ENCODE measurements at regions of chr14 and their contacts with region 1.

Region 1: GRCh38 chr14:63632932-63633514 is 8.6 kb downstream of the WDR89 start:
- DNase-seq: peak in 1 of 2 experiments; percentile 44
- H3K4me3 ChIP-seq: no peak overlapping the region
- H3K27ac ChIP-seq: no peak overlapping the region
- H3K4me1 ChIP-seq: no peaks in the 10 kb centered on the region
- H3K27me3 ChIP-seq: no peaks in the 10 kb centered on the region
- CTCF ChIP-seq: peak; percentile 75

Region 2: GRCh38 chr14:63248211-63248610 is 384.8 kb before region 1 on chr14:
- CTCF ChIA-PET with region 1: no interaction called
- POLR2A ChIA-PET with region 1: no interaction called
- intact Hi-C with region 1: no loop called
- DNase-seq: no peak
- H3K4me3 ChIP-seq: no peak overlapping the region
- H3K27ac ChIP-seq: no peak overlapping the region
- H3K4me1 ChIP-seq: no peaks in the 10 kb centered on the region
- H3K27me3 ChIP-seq: no peaks in the 10 kb centered on the region
- CTCF ChIP-seq: no peak

Region 3: GRCh38 chr14:63388763-63389431 is 244.1 kb before region 1 on chr14:
- CTCF ChIA-PET with region 1: no interaction called
- POLR2A ChIA-PET with region 1: no interaction called
- intact Hi-C with region 1: loop called (anchors 2 kb)
- DNase-seq: peak in 1 of 2 experiments; percentile 57
- H3K4me3 ChIP-seq: no peak overlapping the region
- H3K27ac ChIP-seq: no peak overlapping the region
- H3K4me1 ChIP-seq: no peaks in the 10 kb centered on the region
- H3K27me3 ChIP-seq: no peaks in the 10 kb centered on the region
- CTCF ChIP-seq: peak; percentile 84

Region 4: DNA sequence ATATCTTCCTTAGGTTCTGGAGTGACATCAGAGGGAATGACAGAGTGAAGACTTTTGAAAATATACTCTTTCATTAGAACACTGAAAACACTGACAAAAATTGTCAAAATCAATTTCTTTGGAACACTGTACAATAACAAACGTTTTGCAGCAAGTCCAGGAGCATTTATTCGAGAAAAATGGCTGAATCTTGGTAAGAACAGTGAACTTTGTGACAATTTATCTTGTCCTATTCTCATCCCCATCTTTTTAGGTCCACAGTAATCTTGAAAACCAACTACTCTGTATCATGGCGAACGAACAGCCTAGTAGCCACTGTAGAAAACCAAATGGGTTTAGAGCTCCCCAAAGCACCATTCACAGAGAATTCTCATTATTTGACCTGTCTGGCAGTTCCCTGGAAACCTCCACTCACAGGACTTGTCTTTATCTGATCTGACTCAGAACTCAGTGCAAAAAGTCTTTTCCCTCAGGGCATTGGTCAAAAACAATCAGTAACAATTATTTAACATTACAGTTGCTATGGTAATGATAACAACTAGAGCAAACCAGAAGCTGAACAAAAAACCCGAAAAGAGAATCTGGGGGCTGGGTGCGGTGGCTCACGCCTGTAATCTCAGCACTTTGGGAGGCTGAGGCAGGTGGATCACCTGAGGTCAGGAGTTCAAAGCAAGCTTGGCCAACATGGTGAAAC is 69.5 kb before region 1 on chr14:
- CTCF ChIA-PET with region 1: no interaction called
- POLR2A ChIA-PET with region 1: no interaction called
- intact Hi-C with region 1: no loop called
- DNase-seq: peak; percentile 60 to 96
- H3K4me3 ChIP-seq: no peak overlapping the region
- H3K27ac ChIP-seq: peak overlapping the region; percentile 29
- H3K4me1 ChIP-seq: peaks cover 26% of the 10 kb centered on the region
- H3K27me3 ChIP-seq: no peaks in the 10 kb centered on the region
- CTCF ChIP-seq: no peak